ENCODE measurements at regions of chr2 and their contacts with region 1.

Region 1: DNA sequence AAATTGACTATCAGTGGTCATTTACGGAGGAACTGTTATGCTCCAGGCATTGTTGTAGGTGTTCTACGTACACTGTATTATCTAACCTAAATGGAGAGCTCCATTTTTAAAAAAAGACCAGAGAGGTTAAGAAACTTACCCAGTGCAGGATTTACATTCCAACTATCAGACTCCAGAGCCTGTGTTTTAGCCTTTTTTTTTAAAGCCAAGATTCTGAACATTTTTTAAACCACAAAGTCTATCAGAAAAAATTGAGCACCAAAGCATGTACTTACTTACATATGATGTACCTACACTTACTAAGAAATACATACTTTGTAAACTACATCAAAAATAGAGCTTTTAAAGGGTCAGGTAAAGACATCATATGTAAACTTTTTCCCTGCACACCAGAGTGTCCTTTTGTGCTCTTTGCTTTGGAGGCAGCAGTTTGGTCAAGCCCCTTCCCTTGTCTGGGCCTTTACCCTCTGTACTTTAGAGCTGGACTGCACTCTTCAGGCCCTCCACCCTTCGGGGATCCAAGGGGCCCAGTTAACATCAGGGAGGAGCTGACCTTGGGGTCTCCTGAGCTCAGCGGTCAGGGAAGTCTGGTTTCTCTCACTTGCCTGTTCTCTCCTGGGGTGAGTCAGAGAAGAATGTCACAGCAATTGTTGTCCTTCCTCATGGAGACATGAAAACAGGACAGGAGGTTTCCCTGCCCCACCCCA is 58.4 kb downstream of the ITGB1BP1 start:
- DNase-seq: no peak
- H3K4me3 ChIP-seq: no peak overlapping the region
- H3K27ac ChIP-seq: no peak overlapping the region
- H3K4me1 ChIP-seq: no peaks in the 10 kb centered on the region
- H3K27me3 ChIP-seq: no peaks in the 10 kb centered on the region
- CTCF ChIP-seq: no peak

Region 2: DNA sequence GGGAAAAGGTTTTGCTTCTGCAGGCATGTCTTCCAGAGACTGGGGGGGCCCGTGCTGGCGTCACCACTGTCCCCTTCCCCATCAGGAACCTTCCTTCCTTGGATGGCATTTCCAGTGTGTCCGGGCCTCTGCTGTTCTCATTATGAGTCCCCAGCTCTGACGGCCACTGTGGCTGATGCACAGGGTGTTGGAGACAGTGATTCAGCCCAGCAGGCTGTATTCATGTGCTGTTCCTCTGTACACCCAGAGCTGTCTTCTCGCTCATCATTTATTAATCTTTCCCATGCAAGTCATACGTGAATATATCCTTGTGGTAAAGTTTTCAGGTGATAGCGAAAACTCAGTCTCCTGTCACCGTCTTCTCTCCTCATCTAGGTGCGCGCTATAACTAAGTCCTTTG is 100.6 kb before region 1 on chr2:
- CTCF ChIA-PET with region 1: no interaction called
- dilution Hi-C with region 1: no loop called
- in situ Hi-C with region 1: no loop called
- intact Hi-C with region 1: no loop called
- DNase-seq: no peak
- H3K4me3 ChIP-seq: no peak overlapping the region
- H3K27ac ChIP-seq: no peak overlapping the region
- H3K4me1 ChIP-seq: no peaks in the 10 kb centered on the region
- H3K27me3 ChIP-seq: no peaks in the 10 kb centered on the region
- CTCF ChIP-seq: no peak

Region 3: GRCh38 chr2:9326975-9327374 is 38.0 kb before region 1 on chr2:
- CTCF ChIA-PET with region 1: no interaction called
- dilution Hi-C with region 1: loop called (anchors 5 kb)
- in situ Hi-C with region 1: no loop called
- intact Hi-C with region 1: no loop called
- DNase-seq: no peak
- H3K4me3 ChIP-seq: no peak overlapping the region
- H3K27ac ChIP-seq: no peak overlapping the region
- H3K4me1 ChIP-seq: no peaks in the 10 kb centered on the region
- H3K27me3 ChIP-seq: no peaks in the 10 kb centered on the region
- CTCF ChIP-seq: no peak

Region 4: DNA sequence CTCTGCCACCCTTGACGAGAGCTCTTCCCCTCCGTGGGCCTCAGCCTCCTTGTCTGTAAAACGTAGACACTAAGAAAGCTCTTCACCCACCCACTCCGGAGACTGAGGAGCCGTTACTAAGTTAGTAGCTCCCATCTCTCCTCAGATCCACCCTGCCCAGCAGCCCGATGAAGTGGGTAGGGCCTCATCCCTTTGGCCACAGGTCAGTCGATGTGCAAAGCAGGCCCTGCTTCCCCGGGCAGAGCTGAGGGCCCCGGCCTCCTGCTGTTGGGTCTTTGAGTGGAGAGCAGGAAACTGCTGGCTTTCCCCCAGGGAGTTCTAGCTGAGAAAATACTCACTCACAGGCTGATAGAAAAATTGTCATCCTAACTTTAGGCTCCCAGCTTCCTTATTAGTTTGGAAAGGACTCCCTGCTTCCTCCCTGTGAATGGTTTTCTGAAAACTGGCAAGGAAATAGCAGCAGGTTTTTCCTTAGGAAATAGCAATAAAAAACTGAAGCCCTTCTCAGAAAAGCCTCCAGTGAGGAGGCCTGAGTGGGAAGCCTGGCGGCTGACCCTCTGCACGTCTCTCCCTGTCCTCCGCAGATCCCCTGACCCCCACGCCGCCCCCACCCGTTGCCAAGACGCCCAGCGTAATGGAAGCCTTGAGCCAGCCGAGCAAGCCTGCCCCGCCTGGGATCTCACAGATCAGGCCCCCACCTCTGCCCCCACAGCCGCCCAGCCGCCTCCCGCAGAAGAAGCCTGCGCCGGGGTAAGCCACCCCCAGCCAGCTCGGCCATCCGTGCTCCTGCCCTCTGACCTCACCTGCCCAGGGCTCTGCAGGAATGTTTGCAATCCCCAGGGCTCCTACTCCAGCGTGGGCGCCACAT is 28.2 kb after region 1 on chr2:
- CTCF ChIA-PET with region 1: no interaction called
- dilution Hi-C with region 1: no loop called
- in situ Hi-C with region 1: no loop called
- intact Hi-C with region 1: no loop called
- DNase-seq: no peak
- H3K4me3 ChIP-seq: no peak overlapping the region
- H3K27ac ChIP-seq: no peak overlapping the region
- H3K4me1 ChIP-seq: no peaks in the 10 kb centered on the region
- H3K27me3 ChIP-seq: no peaks in the 10 kb centered on the region
- CTCF ChIP-seq: no peak

Region 5: DNA sequence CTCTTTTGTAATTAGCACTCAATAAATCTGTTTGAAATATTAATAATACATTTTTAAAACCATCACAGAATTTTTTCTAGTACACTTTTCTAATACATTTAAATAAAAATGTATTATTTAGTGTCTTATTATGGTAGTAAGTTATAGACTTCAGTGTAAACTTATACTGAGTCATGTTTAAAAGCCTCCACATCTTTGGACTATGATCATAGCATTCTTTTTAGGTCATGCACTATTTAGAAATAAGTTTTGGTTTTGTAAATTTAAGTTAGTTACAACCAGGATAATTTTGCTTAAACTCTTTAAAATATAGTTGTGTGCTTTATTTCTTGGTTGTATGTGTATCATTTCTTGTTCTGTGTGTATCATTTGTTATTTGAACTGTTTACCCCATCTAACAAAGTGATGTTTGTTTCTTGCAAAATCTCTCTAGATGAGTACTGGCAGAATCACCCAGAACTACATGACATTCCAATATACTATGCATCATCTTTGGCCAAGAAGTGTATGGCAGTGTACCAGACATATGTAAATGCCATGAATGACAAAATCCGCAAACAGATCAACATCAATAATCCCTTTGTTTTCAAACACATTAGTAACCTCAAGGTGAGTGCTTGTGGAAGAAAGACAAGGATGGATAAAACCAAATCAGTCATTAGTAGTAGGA is 75.2 kb after region 1 on chr2:
- CTCF ChIA-PET with region 1: no interaction called
- dilution Hi-C with region 1: no loop called
- in situ Hi-C with region 1: no loop called
- intact Hi-C with region 1: no loop called
- DNase-seq: peak; percentile 79
- H3K4me3 ChIP-seq: no peak overlapping the region
- H3K27ac ChIP-seq: no peak overlapping the region
- H3K4me1 ChIP-seq: no peaks in the 10 kb centered on the region
- H3K27me3 ChIP-seq: no peaks in the 10 kb centered on the region
- CTCF ChIP-seq: no peak

Measured in mammary epithelial cell (primary cell).